ENCODE measurements at regions of chr10 and their contacts with region 1.

Region 1: DNA sequence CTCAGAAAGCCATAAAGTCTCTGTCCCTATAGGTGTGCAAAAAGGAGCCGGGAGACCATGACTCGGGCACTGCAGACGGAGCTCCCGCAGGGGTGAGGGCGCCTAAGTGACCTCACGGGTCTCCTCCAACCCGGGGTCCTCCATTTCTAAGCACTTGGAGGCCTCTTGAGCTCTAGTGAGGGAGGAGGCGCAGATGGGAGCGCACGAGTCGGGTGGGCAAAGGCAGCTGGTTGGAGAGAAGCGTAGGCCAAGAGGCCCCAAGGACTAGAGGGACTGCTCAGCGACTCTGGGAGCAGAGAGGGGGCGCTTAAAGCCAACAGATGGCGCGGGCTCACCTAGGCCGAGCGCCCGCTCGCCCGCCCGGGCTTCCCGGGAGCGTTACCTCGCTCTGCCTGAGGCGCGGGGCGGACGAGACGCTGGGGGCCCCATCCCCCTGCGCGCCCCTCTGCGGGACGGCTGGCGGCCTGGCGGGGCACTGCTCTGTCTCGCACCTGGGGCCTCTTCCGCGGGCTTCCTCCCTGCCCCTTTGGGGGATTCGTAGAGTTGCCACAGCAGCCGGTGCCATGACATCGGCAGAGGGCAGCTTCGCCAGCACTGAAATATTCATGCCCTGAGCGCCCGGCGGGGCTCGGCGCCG is 518 bp upstream of the CDH23 start:
- DNase-seq: peak; percentile 68 to 83 (median 73)
- ATAC-seq: peak; percentile 84 to 95 (median 92)
- H3K4me3 ChIP-seq: peak overlapping the region; percentile 37 to 79 (median 58)
- H3K27ac ChIP-seq: peak overlapping the region in 3 of 12 donors; percentile 57 to 70 (median 70)
- H3K4me1 ChIP-seq: peaks cover 0 to 28% (median 12%) of the 10 kb centered on the region in 12 donors
- H3K27me3 ChIP-seq: peaks cover 0 to 51% (median 18%) of the 10 kb centered on the region in 9 donors
- CTCF ChIP-seq: peak; percentile 47 to 82 (median 74)
- POLR2A ChIP-seq: no peak

Region 2: DNA sequence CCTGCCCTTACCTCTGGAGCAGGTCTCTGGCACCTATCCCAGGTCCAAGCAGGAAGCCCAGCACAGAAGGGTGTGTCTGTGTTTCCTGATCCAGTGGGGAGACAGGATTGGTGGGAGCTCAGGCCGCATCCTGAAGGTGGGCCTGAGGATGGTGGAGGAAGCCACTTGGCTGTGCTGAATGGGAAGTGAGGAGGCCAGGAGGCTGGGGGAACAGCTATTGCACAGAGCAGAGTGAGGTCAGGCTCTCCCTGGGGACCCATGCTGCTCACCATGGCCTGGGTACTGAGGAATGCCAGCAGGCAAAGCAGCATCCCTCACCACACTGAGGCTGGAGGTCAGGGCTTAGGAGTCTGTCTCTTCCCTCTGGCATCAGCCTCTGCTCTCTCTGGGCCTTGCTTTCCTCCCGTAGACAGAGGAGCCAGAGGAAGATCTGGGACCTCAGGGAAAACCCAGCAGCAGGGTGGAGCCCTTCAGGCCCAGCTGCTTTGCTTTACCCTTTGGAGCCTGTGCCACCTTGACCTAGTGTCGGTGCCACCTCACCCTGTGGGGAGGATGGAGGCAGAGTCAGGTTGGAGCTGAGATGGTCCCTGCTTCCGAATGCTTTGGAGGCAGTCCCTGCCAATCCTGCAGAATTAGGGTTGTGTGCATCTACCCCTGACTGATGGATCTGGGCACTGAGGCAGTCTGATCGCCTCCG is 39.5 kb after region 1 on chr10:
- intact Hi-C with region 1: loop called in 1 of 10 experiments (anchors 2 kb)
- DNase-seq: peak in 4 of 5 donors; percentile 49 to 62 (median 58)
- ATAC-seq: peak; percentile 57 to 86 (median 74)
- H3K4me3 ChIP-seq: no peak overlapping the region
- H3K27ac ChIP-seq: peak overlapping the region in 10 of 12 donors; percentile 17 to 86 (median 72)
- H3K4me1 ChIP-seq: peaks cover 0 to 37% (median 23%) of the 10 kb centered on the region in 12 donors
- H3K27me3 ChIP-seq: no peaks in the 10 kb centered on the region
- CTCF ChIP-seq: no peak
- POLR2A ChIP-seq: no peak

Region 3: GRCh38 chr10:71569775-71570588 is 173.8 kb after region 1 on chr10:
- intact Hi-C with region 1: loop called (anchors 1 to 5 kb)
- DNase-seq: peak; percentile 51 to 74 (median 71)
- ATAC-seq: peak in 3 of 4 donors; percentile 22 to 73 (median 62)
- H3K4me3 ChIP-seq: no peak overlapping the region
- H3K27ac ChIP-seq: no peak overlapping the region
- H3K4me1 ChIP-seq: no peaks in the 10 kb centered on the region
- H3K27me3 ChIP-seq: no peaks in the 10 kb centered on the region
- CTCF ChIP-seq: peak; percentile 80 to 94 (median 86)
- POLR2A ChIP-seq: no peak

Region 4: GRCh38 chr10:71696628-71697326 is 300.6 kb after region 1 on chr10:
- intact Hi-C with region 1: loop called in 4 of 10 experiments (anchors 1 to 10 kb)
- DNase-seq: peak; percentile 53 to 83 (median 59)
- ATAC-seq: peak; percentile 54 to 73 (median 62)
- H3K4me3 ChIP-seq: no peak overlapping the region
- H3K27ac ChIP-seq: no peak overlapping the region
- H3K4me1 ChIP-seq: peaks cover 0 to 67% (median 36%) of the 10 kb centered on the region in 12 donors
- H3K27me3 ChIP-seq: no peaks in the 10 kb centered on the region
- CTCF ChIP-seq: peak; percentile 73 to 93 (median 82)
- POLR2A ChIP-seq: no peak

Region 5: GRCh38 chr10:71812016-71812912 is 416.1 kb after region 1 on chr10:
- intact Hi-C with region 1: loop called in 3 of 10 experiments (anchors 5 to 10 kb)
- DNase-seq: peak; percentile 57 to 87 (median 68)
- ATAC-seq: peak; percentile 66 to 87 (median 84)
- H3K4me3 ChIP-seq: no peak overlapping the region
- H3K27ac ChIP-seq: no peak overlapping the region
- H3K4me1 ChIP-seq: peaks cover 0 to 30% (median 10%) of the 10 kb centered on the region in 12 donors
- H3K27me3 ChIP-seq: peaks cover 0 to 9% (median 0%) of the 10 kb centered on the region in 9 donors
- CTCF ChIP-seq: peak; percentile 54 to 89 (median 84)
- POLR2A ChIP-seq: no peak